Panc1 (cell line): ENCODE measurements at regions of chr1 and their contacts with region 1.

Region 1: GRCh38 chr1:160046494-160047110 is 14.8 kb upstream of the PIGM start:
- DNase-seq: no peak
- ATAC-seq: peak; percentile 85
- H3K4me3 ChIP-seq: no peak overlapping the region
- H3K27ac ChIP-seq: no peak overlapping the region
- H3K4me1 ChIP-seq: no peaks in the 10 kb centered on the region
- H3K27me3 ChIP-seq: peaks cover 11% of the 10 kb centered on the region
- CTCF ChIP-seq: peak; percentile 80

Region 2: GRCh38 chr1:160078512-160079195 is 32.1 kb after region 1 on chr1:
- CTCF ChIA-PET with region 1: interaction called, 11 read pairs
- POLR2A ChIA-PET with region 1: interaction called, 3 read pairs
- in situ Hi-C with region 1: no loop called
- intact Hi-C with region 1: no loop called
- DNase-seq: no peak
- ATAC-seq: peak; percentile 81; the same call in 1 of the 2 replicates
- H3K4me3 ChIP-seq: no peak overlapping the region
- H3K27ac ChIP-seq: no peak overlapping the region
- H3K4me1 ChIP-seq: no peaks in the 10 kb centered on the region
- H3K27me3 ChIP-seq: peaks cover 28% of the 10 kb centered on the region
- CTCF ChIP-seq: peak; percentile 92

Region 3: GRCh38 chr1:160085686-160086455 is 39.3 kb after region 1 on chr1:
- CTCF ChIA-PET with region 1: interaction called, 13 read pairs
- POLR2A ChIA-PET with region 1: no interaction called
- in situ Hi-C with region 1: no loop called
- intact Hi-C with region 1: loop called (anchors 2 kb)
- DNase-seq: no peak
- ATAC-seq: peak; percentile 82
- H3K4me3 ChIP-seq: no peak overlapping the region
- H3K27ac ChIP-seq: no peak overlapping the region
- H3K4me1 ChIP-seq: no peaks in the 10 kb centered on the region
- H3K27me3 ChIP-seq: peaks cover 20% of the 10 kb centered on the region
- CTCF ChIP-seq: peak; percentile 91

Region 4: GRCh38 chr1:160344936-160345335 is 298.3 kb after region 1 on chr1:
- CTCF ChIA-PET with region 1: interaction called, 11 read pairs
- POLR2A ChIA-PET with region 1: no interaction called
- in situ Hi-C with region 1: no loop called
- intact Hi-C with region 1: no loop called
- DNase-seq: no peak
- ATAC-seq: no peak
- H3K4me3 ChIP-seq: no peak overlapping the region
- H3K27ac ChIP-seq: no peak overlapping the region
- H3K4me1 ChIP-seq: peaks cover 11% of the 10 kb centered on the region
- H3K27me3 ChIP-seq: no peaks in the 10 kb centered on the region
- CTCF ChIP-seq: no peak